ENCODE measurements at regions of chr6 and their contacts with region 1.

Region 1: GRCh38 chr6:159862103-159862502 is 28.7 kb upstream of the MAS1 start:
- DNase-seq: no peak
- H3K4me3 ChIP-seq: no peak overlapping the region
- H3K27ac ChIP-seq: no peak overlapping the region
- H3K4me1 ChIP-seq: peaks cover 0 to 4% (median 0%) of the 10 kb centered on the region in 4 donors
- H3K27me3 ChIP-seq: no peaks in the 10 kb centered on the region
- CTCF ChIP-seq: no peak

Region 2: DNA sequence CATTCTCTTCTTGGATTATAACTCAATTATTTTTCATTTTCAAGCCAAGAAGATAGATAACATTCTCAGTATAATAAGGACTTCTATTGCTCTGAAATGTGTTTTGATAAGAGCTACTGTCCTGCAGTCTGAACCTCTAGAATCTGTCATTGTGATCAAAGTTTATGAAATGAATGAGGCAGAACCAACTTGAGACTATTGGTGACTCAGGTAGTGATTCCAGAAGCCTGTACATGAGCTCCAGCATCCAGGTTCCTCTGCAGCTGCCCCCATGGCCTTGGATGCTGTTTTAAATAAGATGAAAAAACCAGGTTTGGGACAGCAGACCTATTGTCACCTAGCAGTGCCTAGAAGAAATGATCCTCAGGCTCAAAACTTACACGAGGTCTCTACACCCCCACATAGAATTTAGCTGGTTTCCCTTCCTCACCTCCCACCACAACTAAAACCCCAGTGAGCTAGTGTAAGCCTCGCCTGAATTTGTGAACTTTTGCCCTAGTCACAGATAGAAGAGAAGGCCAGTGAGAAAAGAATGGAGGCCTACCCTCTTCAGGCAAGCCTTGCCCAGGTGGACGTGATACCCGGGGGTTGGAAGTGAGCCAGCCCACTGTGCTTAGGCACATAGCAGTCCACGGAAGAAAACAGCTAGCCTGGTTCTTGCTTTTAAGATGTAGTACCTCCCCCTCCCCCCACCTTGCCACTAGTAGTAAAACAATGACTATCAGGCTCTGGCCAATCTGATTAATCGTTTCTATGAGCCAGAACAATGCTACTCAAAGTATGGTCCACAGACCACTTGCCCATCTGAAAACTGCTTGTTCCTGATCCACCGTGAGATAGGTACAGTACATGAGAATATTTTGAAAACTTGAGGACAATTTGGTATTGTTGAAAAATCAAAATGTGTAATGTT is 1953.5 kb before region 1 on chr6:
- intact Hi-C with region 1: no loop called
- DNase-seq: no peak
- H3K4me3 ChIP-seq: no peak overlapping the region
- H3K27ac ChIP-seq: no peak overlapping the region
- H3K4me1 ChIP-seq: peaks cover 0 to 11% (median 9%) of the 10 kb centered on the region in 4 donors
- H3K27me3 ChIP-seq: no peaks in the 10 kb centered on the region
- CTCF ChIP-seq: no peak

Region 3: GRCh38 chr6:159595173-159595572 is 266.9 kb before region 1 on chr6:
- intact Hi-C with region 1: no loop called
- DNase-seq: no peak
- H3K4me3 ChIP-seq: no peak overlapping the region
- H3K27ac ChIP-seq: peak overlapping the region; percentile 41 to 42
- H3K4me1 ChIP-seq: peaks cover 0 to 17% (median 4%) of the 10 kb centered on the region in 4 donors
- H3K27me3 ChIP-seq: no peaks in the 10 kb centered on the region
- CTCF ChIP-seq: no peak

Region 4: GRCh38 chr6:159829526-159829925 is 32.6 kb before region 1 on chr6:
- intact Hi-C with region 1: no loop called
- DNase-seq: no peak
- H3K4me3 ChIP-seq: no peak overlapping the region
- H3K27ac ChIP-seq: no peak overlapping the region
- H3K4me1 ChIP-seq: peaks cover 0 to 30% (median 7%) of the 10 kb centered on the region in 4 donors
- H3K27me3 ChIP-seq: no peaks in the 10 kb centered on the region
- CTCF ChIP-seq: no peak

Region 5: GRCh38 chr6:159941286-159942113 is 79.4 kb after region 1 on chr6:
- intact Hi-C with region 1: loop called (anchors 1 kb)
- DNase-seq: no peak
- H3K4me3 ChIP-seq: no peak overlapping the region
- H3K27ac ChIP-seq: peak overlapping the region in 1 of 2 donors; percentile 62
- H3K4me1 ChIP-seq: peaks cover 0 to 62% (median 24%) of the 10 kb centered on the region in 4 donors
- H3K27me3 ChIP-seq: no peaks in the 10 kb centered on the region
- CTCF ChIP-seq: peak; percentile 61 to 64

Region 6: GRCh38 chr6:160071800-160072690 is 209.9 kb after region 1 on chr6:
- intact Hi-C with region 1: loop called (anchors 10 kb)
- DNase-seq: no peak
- H3K4me3 ChIP-seq: no peak overlapping the region
- H3K27ac ChIP-seq: no peak overlapping the region
- H3K4me1 ChIP-seq: no peaks in the 10 kb centered on the region
- H3K27me3 ChIP-seq: no peaks in the 10 kb centered on the region
- CTCF ChIP-seq: peak in 1 of 2 experiments; percentile 15

Region 7: GRCh38 chr6:160455541-160456213 is 593.6 kb after region 1 on chr6:
- intact Hi-C with region 1: loop called (anchors 10 kb)
- DNase-seq: peak; percentile 40 to 83
- H3K4me3 ChIP-seq: peak overlapping the region; percentile 15 to 23
- H3K27ac ChIP-seq: peak overlapping the region; percentile 30 to 60
- H3K4me1 ChIP-seq: peaks cover 0 to 10% (median 6%) of the 10 kb centered on the region in 4 donors
- H3K27me3 ChIP-seq: no peaks in the 10 kb centered on the region
- CTCF ChIP-seq: peak; percentile 94 to 98